Cardiac septum (tissue), 1 donor: ENCODE measurements at regions of chr10 and their contacts with region 1.

Region 1: DNA sequence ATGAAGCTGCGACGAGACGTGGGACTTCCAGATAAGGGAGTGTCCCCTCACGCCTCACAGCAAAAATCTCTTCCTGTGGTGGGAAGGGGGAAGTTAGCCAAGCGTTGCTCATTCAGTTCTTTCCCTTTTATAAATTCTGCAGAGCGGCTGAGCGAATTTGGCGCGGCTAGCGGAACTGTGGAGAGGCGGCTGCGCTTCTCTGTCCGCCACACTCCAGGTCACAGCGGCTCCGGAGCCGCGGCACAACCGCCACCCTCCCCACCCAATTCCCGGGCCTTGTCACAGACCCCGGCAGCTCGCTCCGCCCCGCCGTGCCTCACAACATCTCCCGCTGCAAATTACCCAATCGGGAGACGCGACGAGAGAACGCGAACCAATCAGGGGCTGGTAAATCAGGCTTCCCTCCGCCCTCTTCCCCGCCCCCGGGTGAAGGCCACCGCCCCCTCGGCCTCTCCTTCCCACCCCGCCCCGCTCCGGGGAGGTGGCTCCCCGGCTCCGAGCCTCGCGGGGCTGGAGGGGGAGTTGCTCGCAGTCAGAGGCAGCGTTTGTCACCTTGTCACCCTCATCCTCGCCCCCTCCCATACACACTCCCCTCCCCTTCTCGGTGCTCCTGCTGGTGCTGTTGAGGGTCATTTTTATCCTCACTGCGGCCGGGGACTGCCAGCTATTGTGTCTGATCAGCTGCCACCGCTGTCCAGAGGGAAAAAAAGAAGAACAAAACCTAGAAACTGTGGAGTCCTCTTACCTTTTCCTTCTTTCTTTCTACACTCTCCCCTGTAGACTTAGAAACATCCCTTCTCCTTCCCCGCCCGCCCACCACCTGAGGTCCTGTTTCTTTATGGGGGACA is 918 bp upstream of the ARHGAP21 start:
- DNase-seq: peak; percentile 98

Region 2: DNA sequence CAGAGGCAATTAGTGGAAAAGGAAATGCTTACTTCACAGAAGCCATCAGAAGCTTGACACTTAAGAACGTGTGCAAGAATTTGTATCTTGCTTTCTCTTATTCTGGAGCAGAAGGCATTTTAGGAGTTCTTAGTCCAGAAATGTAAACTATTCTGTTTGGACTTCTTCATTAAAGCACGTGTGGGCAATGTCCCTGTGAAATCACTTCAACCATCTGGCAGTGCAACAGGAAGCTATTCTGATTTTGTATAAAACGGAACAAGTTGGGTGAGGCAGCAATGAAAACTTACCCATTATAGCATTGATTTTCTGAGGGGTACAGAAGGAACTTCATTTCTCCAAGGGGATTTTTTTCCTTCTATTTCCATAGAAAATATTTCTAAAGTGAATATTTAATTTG is 20.3 kb after region 1 on chr10:
- intact Hi-C with region 1: no loop called
- DNase-seq: no peak

Region 3: GRCh38 chr10:24952707-24953645 is 228.4 kb after region 1 on chr10:
- intact Hi-C with region 1: loop called (anchors 5 kb)
- DNase-seq: no peak

Region 4: GRCh38 chr10:25016376-25017154 is 292.0 kb after region 1 on chr10 and contains the start of gene THNSL1:
- intact Hi-C with region 1: loop called (anchors 2 kb)
- DNase-seq: peak; percentile 97
- total RNA-seq, gene THNSL1: 4.3 TPM

Region 5: GRCh38 chr10:25080880-25081581 is 356.4 kb after region 1 on chr10:
- intact Hi-C with region 1: loop called (anchors 5 kb)
- DNase-seq: peak; percentile 89